HepG2 (cell line): ENCODE measurements at regions of chr2 and their contacts with region 1.

Region 1: DNA sequence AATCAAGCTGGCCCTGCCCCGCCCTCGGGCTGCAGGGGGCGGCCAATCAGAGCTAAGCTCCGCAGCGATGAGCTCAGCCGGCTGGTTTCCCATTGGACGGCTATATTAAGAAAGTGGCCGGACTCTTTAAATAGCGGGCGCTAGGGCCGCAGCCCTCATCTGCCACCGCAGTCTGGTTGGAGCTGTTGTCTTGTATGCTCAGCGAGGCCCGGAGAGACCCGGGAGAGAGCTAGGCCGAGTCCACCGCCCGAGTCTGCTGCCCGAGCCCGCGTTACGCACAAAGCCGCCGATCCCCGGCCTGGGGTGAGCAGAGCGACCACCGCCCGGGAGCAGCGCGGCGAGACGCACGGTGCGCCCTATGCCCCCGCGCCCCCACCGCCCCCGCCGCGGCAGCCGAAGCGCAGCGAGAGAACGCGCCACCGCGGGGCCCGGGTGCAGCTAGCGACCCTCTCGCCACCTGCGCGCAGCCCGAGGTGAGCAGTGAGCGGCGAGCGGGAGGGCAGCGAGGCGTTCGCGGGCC is at the start of gene RHOB:
- DNase-seq: peak; percentile 98
- ATAC-seq: peak; percentile 82
- H3K4me3 ChIP-seq: peak within 1 kb of the TSS; percentile 78 to 97 (median 89)
- H3K27ac ChIP-seq: peak within 1 kb of the TSS; percentile 92
- H3K4me1 ChIP-seq: peaks cover 60% of the 10 kb centered on the region
- H3K27me3 ChIP-seq: no peaks in the 10 kb centered on the region; a peak in 1 of 5 replicates
- CTCF ChIP-seq: no peak
- EP300 ChIP-seq: peak; percentile 35 to 54; a peak in 1 of 4 replicates
- POLR2A ChIP-seq: peak; percentile 100
- RAD21 ChIP-seq: peak; percentile 65
- total RNA-seq, gene RHOB: 192 and 268 TPM in 2 replicates

Region 2: GRCh38 chr2:20391951-20392699 is 54.9 kb before region 1 on chr2:
- CTCF ChIA-PET with region 1: no interaction called
- POLR2A ChIA-PET with region 1: interaction called, 10 read pairs
- in situ Hi-C with region 1: no loop called
- intact Hi-C with region 1: no loop called
- DNase-seq: peak; percentile 32
- ATAC-seq: peak; percentile 22
- H3K4me3 ChIP-seq: no peak overlapping the region
- H3K27ac ChIP-seq: no peak overlapping the region
- H3K4me1 ChIP-seq: peaks cover 11% of the 10 kb centered on the region
- H3K27me3 ChIP-seq: peaks cover 3 to 14% of the 10 kb centered on the region in 2 experiments
- CTCF ChIP-seq: no peak
- EP300 ChIP-seq: no peak
- POLR2A ChIP-seq: no peak
- RAD21 ChIP-seq: no peak

Region 3: DNA sequence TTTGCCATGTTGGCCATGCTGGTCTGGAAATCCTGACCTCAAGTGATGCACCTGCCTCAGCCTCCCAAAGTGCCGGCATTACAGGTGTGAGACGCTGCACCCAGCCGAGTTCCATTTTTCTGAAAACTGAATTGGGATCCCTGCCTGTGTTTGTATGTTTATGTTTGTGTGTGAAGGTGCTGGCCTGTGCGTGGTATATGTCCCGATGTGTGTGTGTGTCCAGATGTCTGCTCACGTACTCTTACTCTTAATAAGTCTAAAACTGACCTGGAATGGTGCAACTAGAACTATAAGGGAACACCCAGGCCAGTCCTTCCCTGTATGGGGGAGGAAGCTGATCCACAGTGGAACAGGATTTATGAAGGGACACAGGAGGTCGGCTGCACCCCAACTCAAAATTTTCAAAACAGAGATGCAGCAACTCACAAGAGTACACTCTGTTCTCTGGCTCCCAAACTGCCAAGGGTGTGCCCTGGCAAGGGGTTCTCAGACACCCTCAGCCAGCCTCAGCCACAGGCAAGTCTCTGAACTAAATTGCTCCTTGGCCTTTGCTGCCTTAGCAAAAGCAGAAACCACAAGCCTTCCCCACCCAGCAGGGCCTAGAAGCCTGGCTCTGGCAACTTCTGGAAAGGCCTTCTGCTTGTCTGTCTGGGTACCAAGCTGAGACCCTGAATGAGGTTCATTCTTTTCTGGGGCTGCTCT is 36.4 kb after region 1 on chr2:
- CTCF ChIA-PET with region 1: no interaction called
- POLR2A ChIA-PET with region 1: interaction called, 97 read pairs
- in situ Hi-C with region 1: loop called (anchors 5 kb)
- intact Hi-C with region 1: no loop called
- DNase-seq: no peak
- ATAC-seq: no peak
- H3K4me3 ChIP-seq: no peak overlapping the region
- H3K27ac ChIP-seq: no peak overlapping the region
- H3K4me1 ChIP-seq: peaks cover 20% of the 10 kb centered on the region
- H3K27me3 ChIP-seq: peaks cover 19 to 52% of the 10 kb centered on the region in 2 experiments; a peak in 2 of 5 replicates
- CTCF ChIP-seq: no peak
- EP300 ChIP-seq: no peak
- POLR2A ChIP-seq: no peak
- RAD21 ChIP-seq: no peak

Region 4: GRCh38 chr2:20525041-20526035 is 78.4 kb after region 1 on chr2:
- CTCF ChIA-PET with region 1: interaction called, 3 read pairs
- POLR2A ChIA-PET with region 1: interaction called, 233 read pairs
- in situ Hi-C with region 1: no loop called
- intact Hi-C with region 1: loop called (anchors 1 kb)
- DNase-seq: peak; percentile 96
- ATAC-seq: peak; percentile 96
- H3K4me3 ChIP-seq: peak overlapping the region; percentile 2 to 56 (median 21); a peak in 5 of 6 replicates
- H3K27ac ChIP-seq: peak overlapping the region; percentile 69
- H3K4me1 ChIP-seq: peaks cover 81% of the 10 kb centered on the region
- H3K27me3 ChIP-seq: no peaks in the 10 kb centered on the region
- CTCF ChIP-seq: peak; percentile 80
- EP300 ChIP-seq: peak; percentile 48 to 53; a peak in 3 of 4 replicates
- POLR2A ChIP-seq: peak in 1 of 2 experiments; percentile 70; a peak in 2 of 4 replicates
- RAD21 ChIP-seq: peak; percentile 82

Region 5: DNA sequence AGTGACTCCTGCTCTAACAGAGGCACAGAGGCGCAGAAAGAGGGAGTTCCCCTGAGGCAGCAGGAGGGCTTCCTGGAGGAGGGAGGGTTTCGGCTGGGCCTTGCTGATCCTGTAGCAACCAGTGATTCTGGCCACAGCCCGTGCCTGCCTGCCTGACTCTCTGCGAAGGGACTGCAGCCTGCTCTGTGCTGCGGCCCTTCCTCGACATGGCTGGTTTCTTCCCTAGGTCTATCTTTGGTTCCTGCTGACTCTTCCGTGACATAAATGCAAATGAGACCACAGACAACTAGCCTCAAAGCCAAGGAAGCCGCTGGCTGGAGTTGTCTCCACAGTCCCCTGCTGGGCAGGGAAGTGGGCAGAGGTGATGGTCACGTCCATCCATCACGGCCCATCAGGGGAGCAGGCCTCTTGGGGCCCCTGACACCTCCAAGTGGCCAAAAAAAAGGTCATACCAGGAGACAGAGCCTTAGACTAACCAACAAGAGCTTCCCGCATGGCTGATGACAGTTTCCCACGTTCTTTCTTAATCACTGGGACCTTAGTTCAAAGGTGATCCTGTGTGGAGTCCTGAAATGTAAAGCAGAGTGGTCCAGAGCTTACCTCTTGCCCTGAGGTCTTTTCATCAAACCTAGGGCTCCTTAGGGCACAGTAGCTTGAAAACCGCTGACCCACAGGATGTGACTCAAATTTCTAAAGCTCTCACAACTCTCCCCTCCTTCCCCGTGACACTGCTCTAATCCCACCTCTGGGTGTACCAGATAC is 148.6 kb after region 1 on chr2:
- CTCF ChIA-PET with region 1: interaction called, 7 read pairs
- POLR2A ChIA-PET with region 1: interaction called, 1,537 read pairs
- in situ Hi-C with region 1: loop called (anchors 5 kb)
- intact Hi-C with region 1: loop called (anchors 1 kb)
- DNase-seq: peak; percentile 66
- ATAC-seq: no peak
- H3K4me3 ChIP-seq: no peak overlapping the region
- H3K27ac ChIP-seq: peak overlapping the region; percentile 97
- H3K4me1 ChIP-seq: peaks cover 98% of the 10 kb centered on the region
- H3K27me3 ChIP-seq: no peaks in the 10 kb centered on the region; a peak in 1 of 5 replicates
- CTCF ChIP-seq: no peak
- EP300 ChIP-seq: peak in 1 of 2 experiments; percentile 62; a peak in 1 of 4 replicates
- POLR2A ChIP-seq: peak in 1 of 2 experiments; percentile 4; a peak in 1 of 4 replicates
- RAD21 ChIP-seq: peak; percentile 33; the same call in 1 of the 2 replicates

Region 6: DNA sequence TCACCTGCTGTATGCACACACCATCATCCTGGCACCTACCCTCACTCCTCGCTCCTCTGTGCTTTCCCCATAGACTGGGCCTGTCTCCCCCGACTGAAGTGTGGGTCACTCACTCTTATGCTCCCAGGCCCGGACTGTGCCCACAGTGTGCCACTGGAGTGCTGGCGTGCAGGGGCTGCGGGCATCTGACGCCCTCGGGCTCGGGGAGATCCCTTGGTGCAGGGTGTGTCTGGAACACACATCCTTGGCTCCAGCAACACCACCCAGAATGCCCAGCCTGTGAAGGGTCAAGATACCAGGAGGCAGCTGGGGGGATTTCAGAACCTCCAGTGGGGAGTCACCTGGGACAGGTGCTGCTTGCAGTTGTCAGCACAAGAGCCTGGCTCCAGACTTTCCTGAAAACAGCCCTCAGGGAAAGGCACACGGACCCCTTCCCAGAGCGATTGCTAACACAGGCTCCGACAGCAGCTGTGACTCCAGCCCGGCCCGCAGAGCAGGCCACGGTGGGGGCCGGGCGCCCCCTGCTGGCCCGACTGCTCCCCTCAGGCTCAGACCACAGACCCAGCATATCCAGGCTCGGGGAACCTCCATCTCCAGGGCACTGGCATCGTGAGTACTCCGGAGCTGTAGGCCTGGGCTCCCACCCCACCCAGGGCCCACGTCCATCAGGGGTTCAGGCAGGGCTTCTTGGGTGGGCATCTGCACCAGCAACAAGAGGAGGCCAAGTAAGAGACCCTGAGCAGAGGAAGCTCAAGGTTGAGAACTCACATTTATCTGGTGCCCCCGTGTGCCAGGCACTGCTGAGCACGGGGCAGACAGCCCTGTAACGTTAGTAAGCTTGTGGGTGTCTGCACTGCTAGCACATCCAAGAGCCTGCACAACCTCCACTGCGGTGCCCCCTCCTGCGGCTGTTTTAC is 195.3 kb after region 1 on chr2:
- CTCF ChIA-PET with region 1: interaction called, 9 read pairs
- POLR2A ChIA-PET with region 1: interaction called, 51 read pairs
- in situ Hi-C with region 1: loop called (anchors 5 kb)
- intact Hi-C with region 1: loop called (anchors 2 kb)
- DNase-seq: peak; percentile 64
- ATAC-seq: peak; percentile 98
- H3K4me3 ChIP-seq: no peak overlapping the region
- H3K27ac ChIP-seq: no peak overlapping the region
- H3K4me1 ChIP-seq: peaks cover 7% of the 10 kb centered on the region
- H3K27me3 ChIP-seq: no peaks in the 10 kb centered on the region
- CTCF ChIP-seq: peak; percentile 99
- EP300 ChIP-seq: peak in 1 of 2 experiments; percentile 49; a peak in 1 of 4 replicates
- POLR2A ChIP-seq: no peak
- RAD21 ChIP-seq: peak; percentile 100